ENCODE measurements at regions of chr6 and their contacts with region 1.

Region 1: DNA sequence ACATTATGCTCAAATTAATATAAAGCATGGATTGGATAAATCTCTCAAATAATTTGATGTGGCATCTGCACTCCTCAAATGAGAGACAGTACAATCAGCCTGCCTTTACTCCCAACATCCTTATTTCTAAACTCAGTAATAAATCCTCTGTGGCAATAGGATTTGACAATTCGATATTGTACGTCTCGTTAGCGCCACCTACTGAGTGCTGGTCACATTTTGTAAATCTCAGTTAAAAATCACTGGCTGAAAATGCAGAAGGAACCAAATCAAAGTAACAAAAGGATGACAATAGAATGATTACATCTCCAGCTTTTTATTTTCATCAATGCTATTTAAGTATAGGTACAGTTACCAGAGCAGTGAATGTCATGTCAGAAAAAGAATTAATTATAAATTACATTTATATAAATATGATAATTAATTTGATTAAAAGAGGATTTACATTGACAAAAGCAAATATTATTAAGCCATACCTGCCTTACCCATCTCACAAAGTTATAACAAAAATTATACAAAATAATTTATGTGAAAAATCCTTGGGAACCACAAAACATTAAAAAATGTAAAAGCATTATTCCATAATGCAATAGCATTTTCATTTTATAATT is 20.2 kb upstream of the GJE1 start:
- DNase-seq: peak; percentile 75
- H3K4me3 Mint-ChIP-seq: no peak overlapping the region
- H3K27ac Mint-ChIP-seq: no peak overlapping the region
- H3K4me1 Mint-ChIP-seq: no peaks in the 10 kb centered on the region
- H3K27me3 Mint-ChIP-seq: no peaks in the 10 kb centered on the region

Region 2: DNA sequence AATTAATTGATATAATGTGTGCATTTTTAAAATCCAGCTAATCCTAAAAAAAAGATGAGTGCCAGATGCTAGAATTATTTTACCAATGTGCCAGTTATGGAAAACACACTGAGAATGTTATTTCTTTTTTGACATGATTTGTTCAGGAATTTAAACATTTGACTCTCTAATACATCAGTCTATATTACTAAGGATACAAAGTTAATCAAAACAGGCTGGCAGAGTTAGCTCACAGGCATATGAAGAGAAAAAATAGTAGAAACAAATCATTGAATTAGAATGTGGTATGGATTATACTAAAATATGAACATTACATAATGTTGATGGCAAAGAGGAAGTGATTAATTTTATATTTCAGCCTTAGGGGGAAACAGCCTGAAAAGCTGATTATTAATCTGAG is 348.2 kb before region 1 on chr6:
- CTCF ChIA-PET with region 1: no interaction called
- DNase-seq: no peak
- H3K4me3 Mint-ChIP-seq: no peak overlapping the region
- H3K27ac Mint-ChIP-seq: no peak overlapping the region
- H3K4me1 Mint-ChIP-seq: no peaks in the 10 kb centered on the region
- H3K27me3 Mint-ChIP-seq: no peaks in the 10 kb centered on the region

Region 3: GRCh38 chr6:141988954-141989705 is 123.4 kb before region 1 on chr6:
- CTCF ChIA-PET with region 1: interaction called, 10 read pairs
- DNase-seq: peak; percentile 40
- H3K4me3 Mint-ChIP-seq: no peak overlapping the region
- H3K27ac Mint-ChIP-seq: no peak overlapping the region
- H3K4me1 Mint-ChIP-seq: no peaks in the 10 kb centered on the region
- H3K27me3 Mint-ChIP-seq: no peaks in the 10 kb centered on the region

Region 4: GRCh38 chr6:142184307-142184706 is 71.8 kb after region 1 on chr6:
- CTCF ChIA-PET with region 1: no interaction called
- DNase-seq: no peak
- H3K4me3 Mint-ChIP-seq: no peak overlapping the region
- H3K27ac Mint-ChIP-seq: no peak overlapping the region
- H3K4me1 Mint-ChIP-seq: no peaks in the 10 kb centered on the region
- H3K27me3 Mint-ChIP-seq: no peaks in the 10 kb centered on the region

Region 5: GRCh38 chr6:142294679-142295078 is 182.1 kb after region 1 on chr6:
- CTCF ChIA-PET with region 1: no interaction called
- DNase-seq: no peak
- H3K4me3 Mint-ChIP-seq: no peak overlapping the region
- H3K27ac Mint-ChIP-seq: no peak overlapping the region
- H3K4me1 Mint-ChIP-seq: no peaks in the 10 kb centered on the region
- H3K27me3 Mint-ChIP-seq: no peaks in the 10 kb centered on the region